ENCODE measurements at regions of chr5 and their contacts with region 1.

Region 1: GRCh38 chr5:53170748-53171349 is 61.3 kb upstream of the MOCS2 start:
- DNase-seq: peak in 2 of 9 experiments; percentile 9 to 16
- ATAC-seq: no peak
- H3K4me3 ChIP-seq: no peak overlapping the region
- H3K4me3 Mint-ChIP-seq: no peak overlapping the region
- H3K27ac ChIP-seq: no peak overlapping the region
- H3K27ac Mint-ChIP-seq: no peak overlapping the region
- H3K4me1 ChIP-seq: no peaks in the 10 kb centered on the region
- H3K4me1 Mint-ChIP-seq: no peaks in the 10 kb centered on the region
- H3K27me3 ChIP-seq: peaks cover 0 to 4% of the 10 kb centered on the region in 2 experiments
- H3K27me3 Mint-ChIP-seq: peaks cover 11% of the 10 kb centered on the region
- CTCF ChIP-seq: no peak

Region 2: GRCh38 chr5:54229041-54229780 is 1058.4 kb after region 1 on chr5:
- CTCF ChIA-PET with region 1: no interaction called
- POLR2A ChIA-PET with region 1: no interaction called
- intact Hi-C with region 1: loop called in 1 of 2 experiments (anchors 5 kb)
- DNase-seq: peak; percentile 43 to 80 (median 68)
- ATAC-seq: peak; percentile 89
- H3K4me3 ChIP-seq: no peak overlapping the region
- H3K4me3 Mint-ChIP-seq: no peak overlapping the region
- H3K27ac ChIP-seq: no peak overlapping the region
- H3K27ac Mint-ChIP-seq: no peak overlapping the region
- H3K4me1 ChIP-seq: no peaks in the 10 kb centered on the region
- H3K4me1 Mint-ChIP-seq: peaks cover 8% of the 10 kb centered on the region
- H3K27me3 ChIP-seq: no peaks in the 10 kb centered on the region
- H3K27me3 Mint-ChIP-seq: no peaks in the 10 kb centered on the region
- CTCF ChIP-seq: peak; percentile 96